ENCODE measurements at regions of chr15 and their contacts with region 1.

Region 1: DNA sequence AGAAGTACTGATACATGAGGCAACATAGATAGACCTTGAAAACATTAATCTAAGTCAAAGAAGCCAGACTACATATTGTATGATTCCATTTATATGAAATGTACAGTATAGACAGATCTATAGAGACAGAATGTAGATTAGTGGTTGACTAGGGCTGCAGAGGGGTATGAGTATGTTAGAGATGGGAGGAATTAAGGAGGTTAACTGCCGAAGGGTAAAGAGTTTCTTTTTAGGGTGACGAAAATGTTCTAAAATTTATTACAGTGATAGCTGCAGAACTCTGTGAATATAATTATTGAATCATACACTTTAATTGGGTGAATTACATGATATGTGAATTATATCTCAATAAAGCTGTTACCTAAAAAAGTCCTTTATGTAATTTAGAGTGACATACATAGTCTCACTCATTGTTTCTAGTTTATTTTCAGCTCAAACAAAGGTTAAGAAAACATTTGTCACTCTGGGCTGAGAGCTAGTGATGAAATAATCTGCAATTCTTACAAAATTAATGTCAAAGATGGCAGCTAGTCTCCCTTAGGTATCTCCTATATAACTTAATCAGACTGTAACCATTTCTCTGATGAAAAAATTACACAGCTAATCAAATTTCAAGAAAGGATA is 61.4 kb downstream of the DENND4A start:
- DNase-seq: no peak
- ATAC-seq: no peak
- H3K4me3 ChIP-seq: no peak overlapping the region
- H3K27ac ChIP-seq: no peak overlapping the region
- H3K4me1 ChIP-seq: no peaks in the 10 kb centered on the region
- H3K27me3 ChIP-seq: no peaks in the 10 kb centered on the region
- CTCF ChIP-seq: no peak

Region 2: DNA sequence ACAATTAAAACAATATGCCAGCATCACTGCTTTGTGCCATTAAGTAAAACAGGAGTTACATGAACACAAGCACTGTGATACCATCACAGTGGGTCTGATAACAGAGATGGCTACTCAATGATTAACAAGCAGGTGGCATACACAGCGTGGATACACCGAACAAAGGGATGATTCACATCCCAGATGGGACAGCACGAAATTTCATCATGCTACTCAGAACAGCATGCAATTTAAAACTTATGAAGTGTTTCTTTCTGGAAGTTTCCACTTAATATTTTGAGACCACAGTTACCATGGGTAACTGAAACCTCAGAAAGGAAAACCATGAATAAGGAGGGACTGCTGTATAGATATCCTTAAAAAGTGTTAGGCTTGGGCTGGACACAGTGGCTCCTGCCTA is 64.4 kb before region 1 on chr15:
- intact Hi-C with region 1: loop called in 1 of 2 experiments (anchors 10 kb)
- DNase-seq: no peak
- ATAC-seq: no peak
- H3K4me3 ChIP-seq: no peak overlapping the region
- H3K27ac ChIP-seq: no peak overlapping the region
- H3K4me1 ChIP-seq: no peaks in the 10 kb centered on the region
- H3K27me3 ChIP-seq: no peaks in the 10 kb centered on the region
- CTCF ChIP-seq: no peak

Region 3: DNA sequence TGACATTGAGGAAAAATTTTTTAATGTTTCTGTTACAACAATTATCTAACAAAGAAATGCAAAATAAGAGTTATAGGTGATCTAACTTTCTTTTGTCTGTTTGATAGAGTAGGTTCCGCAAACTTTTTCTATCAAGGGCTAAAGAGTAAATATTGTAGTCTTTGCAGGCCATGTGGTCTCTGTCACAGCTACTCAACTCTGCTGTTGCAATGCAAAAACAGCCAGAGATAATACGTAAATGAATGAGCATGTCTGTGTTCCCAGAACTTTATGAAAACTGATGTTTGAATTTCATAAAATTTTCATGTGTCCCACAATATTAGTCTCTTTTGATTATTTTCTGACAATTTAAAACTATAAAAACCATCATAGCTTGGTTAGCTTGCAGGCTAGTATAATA is 35.6 kb before region 1 on chr15:
- intact Hi-C with region 1: no loop called
- DNase-seq: no peak
- ATAC-seq: no peak
- H3K4me3 ChIP-seq: no peak overlapping the region
- H3K27ac ChIP-seq: no peak overlapping the region
- H3K4me1 ChIP-seq: no peaks in the 10 kb centered on the region
- H3K27me3 ChIP-seq: no peaks in the 10 kb centered on the region
- CTCF ChIP-seq: no peak